A673 (cell line): ENCODE measurements at regions of chr1 and their contacts with region 1.

Region 1: DNA sequence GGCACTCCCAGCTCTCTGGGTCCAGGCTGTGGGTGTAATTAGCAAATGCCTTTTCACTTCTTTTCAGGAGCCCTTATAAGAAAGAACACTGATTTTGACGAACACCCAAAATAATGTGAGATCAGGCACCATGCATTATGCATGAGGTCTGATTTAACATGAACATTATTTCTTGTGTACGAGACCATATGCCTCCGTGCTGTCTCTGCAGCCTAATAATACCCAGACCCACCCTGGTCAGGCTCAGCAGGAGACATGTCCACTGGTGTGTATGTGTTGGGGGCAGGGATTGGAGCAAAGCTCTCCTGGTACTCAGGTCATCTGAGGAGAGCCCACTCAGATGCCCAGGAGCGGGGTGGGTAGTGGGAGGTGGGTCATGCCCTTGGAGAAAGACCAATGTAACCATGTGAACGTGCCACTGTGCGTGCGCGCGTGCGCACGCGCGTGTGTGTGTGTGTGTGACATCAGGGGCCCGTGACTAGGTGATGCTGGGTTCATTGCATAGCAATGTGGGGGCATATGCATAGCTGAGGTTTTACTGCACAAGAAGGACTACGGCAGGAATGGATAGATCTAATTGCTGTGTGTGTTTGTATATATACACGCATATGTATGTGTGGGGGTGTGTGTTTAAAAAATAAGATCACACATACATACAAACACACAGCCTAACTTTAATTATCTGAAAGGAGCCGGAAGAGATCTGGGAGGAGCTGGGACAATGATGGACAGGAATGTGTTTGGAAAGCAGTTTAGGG is 7.1 kb downstream of the POU3F1 start:
- DNase-seq: peak; percentile 69
- H3K4me3 ChIP-seq: peak overlapping the region; percentile 13
- H3K27ac ChIP-seq: peak overlapping the region; percentile 93
- H3K4me1 ChIP-seq: peaks cover 50% of the 10 kb centered on the region
- H3K27me3 ChIP-seq: no peaks in the 10 kb centered on the region
- CTCF ChIP-seq: no peak

Region 2: GRCh38 chr1:38826262-38826661 is 786.8 kb after region 1 on chr1:
- CTCF ChIA-PET with region 1: no interaction called
- POLR2A ChIA-PET with region 1: no interaction called
- intact Hi-C with region 1: loop called (anchors 2 kb)
- DNase-seq: peak; percentile 61
- H3K4me3 ChIP-seq: no peak overlapping the region
- H3K27ac ChIP-seq: no peak overlapping the region
- H3K4me1 ChIP-seq: peaks cover 11% of the 10 kb centered on the region
- H3K27me3 ChIP-seq: no peaks in the 10 kb centered on the region
- CTCF ChIP-seq: no peak